ENCODE measurements at regions of chr7 and their contacts with region 1.

Region 1: GRCh38 chr7:101138213-101138870 is 11.4 kb downstream of the SERPINE1 start:
- DNase-seq: peak; percentile 91
- ATAC-seq: peak; percentile 90
- H3K4me3 Mint-ChIP-seq: peak overlapping the region; percentile 54
- H3K27ac Mint-ChIP-seq: peak overlapping the region; percentile 82
- H3K4me1 Mint-ChIP-seq: peaks cover 47% of the 10 kb centered on the region
- H3K27me3 Mint-ChIP-seq: peaks cover 16% of the 10 kb centered on the region

Region 2: DNA sequence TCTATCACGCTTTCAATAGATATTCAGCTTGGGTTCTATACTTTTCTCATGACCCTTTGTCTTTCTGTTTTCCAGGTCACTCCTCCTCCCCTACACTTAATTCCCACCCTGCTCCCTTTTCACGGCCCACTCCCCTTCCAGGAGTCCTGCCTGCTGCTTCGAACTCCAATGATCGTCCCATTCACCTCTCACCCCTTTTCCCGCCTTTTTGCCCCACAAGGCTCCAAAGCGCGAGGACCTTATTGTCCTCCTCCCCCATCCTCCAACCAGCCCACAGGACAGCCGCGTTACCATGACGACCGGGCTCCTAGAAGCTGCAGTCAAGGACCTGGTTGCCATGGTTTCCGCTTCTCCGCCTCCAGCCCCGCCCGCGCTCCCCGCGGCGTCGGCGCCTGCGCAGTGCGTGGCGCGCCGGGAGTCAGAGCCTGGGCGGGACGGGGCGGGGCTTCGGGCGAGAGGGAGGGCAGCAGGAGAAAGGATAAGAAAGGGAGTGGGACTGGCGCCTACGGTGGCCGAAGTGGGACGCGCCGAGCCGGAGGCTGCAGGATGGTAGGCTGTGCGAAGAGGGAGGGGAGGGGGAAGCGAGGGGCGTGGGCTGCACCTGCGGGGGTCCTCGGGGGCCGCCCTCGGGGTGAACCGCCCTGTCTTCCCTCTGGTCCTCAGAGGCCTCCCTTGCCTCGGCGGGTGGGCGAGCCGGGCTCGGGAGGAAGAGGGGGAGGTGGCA is 15.8 kb after region 1 on chr7 and contains the start of gene AP1S1:
- CTCF ChIA-PET with region 1: interaction called, 72 read pairs
- POLR2A ChIA-PET with region 1: no interaction called
- DNase-seq: peak; percentile 96
- ATAC-seq: peak; percentile 86
- H3K4me3 Mint-ChIP-seq: peak within 1 kb of the TSS; percentile 80
- H3K27ac Mint-ChIP-seq: peak within 1 kb of the TSS; percentile 76
- H3K4me1 Mint-ChIP-seq: peaks cover 14% of the 10 kb centered on the region
- H3K27me3 Mint-ChIP-seq: peaks cover 17% of the 10 kb centered on the region
- total RNA-seq, gene AP1S1: 46.2 to 48.9 TPM

Region 3: GRCh38 chr7:101173752-101174244 is 35.5 kb after region 1 on chr7:
- CTCF ChIA-PET with region 1: interaction called, 59 read pairs
- POLR2A ChIA-PET with region 1: no interaction called
- DNase-seq: peak; percentile 81
- ATAC-seq: peak; percentile 65
- H3K4me3 Mint-ChIP-seq: peak overlapping the region; percentile 49
- H3K27ac Mint-ChIP-seq: no peak overlapping the region
- H3K4me1 Mint-ChIP-seq: peaks cover 49% of the 10 kb centered on the region
- H3K27me3 Mint-ChIP-seq: peaks cover 82% of the 10 kb centered on the region

Region 4: DNA sequence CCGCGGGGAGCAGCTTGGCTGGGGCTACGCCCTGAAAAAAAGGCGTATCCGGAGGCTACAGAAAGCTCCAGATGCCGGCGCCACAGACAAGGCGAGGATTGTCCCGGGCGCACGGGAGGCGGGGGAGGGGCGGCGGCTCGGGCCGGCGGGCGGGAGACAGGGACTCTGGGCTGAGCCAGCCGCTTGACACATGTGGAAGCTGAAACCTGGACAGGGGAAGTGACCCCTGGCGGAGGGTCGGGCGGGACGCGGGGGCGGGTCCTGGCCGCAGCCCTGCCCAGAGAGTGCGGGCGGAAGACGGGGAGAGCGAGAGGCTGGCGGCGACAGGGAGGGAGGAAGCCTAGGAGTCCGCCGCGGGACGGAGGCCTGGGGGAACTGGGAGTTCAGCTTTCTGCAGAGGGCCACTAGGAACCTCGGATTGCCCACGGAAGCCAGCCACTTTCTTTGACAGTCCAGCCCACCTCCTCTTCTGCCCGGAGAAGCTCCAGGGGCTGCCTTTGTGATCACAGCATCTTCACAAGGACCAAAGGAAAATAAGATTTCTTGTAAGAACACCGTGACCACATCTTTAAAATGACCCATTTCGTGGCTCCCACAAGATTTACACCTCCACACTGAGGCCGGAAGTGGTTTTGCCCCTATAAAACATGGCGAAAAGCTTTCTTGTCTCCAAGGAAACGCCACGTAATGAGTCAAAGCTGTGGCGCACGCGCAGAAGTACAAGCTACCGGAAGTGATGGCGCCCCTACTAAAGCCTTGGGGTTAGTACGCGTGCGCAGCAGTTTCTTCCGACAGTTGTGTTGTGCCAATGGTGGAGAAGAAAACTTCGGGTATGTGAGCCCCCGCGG is 79.3 kb after region 1 on chr7 and contains the starts of genes PLOD3 and ZNHIT1:
- CTCF ChIA-PET with region 1: interaction called, 18 read pairs
- POLR2A ChIA-PET with region 1: no interaction called
- DNase-seq: peak; percentile 99
- ATAC-seq: peak; percentile 71
- H3K4me3 Mint-ChIP-seq: peak within 1 kb of the TSS; percentile 96
- H3K27ac Mint-ChIP-seq: peak within 1 kb of the TSS; percentile 88
- H3K4me1 Mint-ChIP-seq: peaks cover 36% of the 10 kb centered on the region
- H3K27me3 Mint-ChIP-seq: no peaks in the 10 kb centered on the region
- total RNA-seq, gene PLOD3: 51.1 to 58.1 TPM
- total RNA-seq, gene ZNHIT1: 56.1 to 58.4 TPM

Region 5: DNA sequence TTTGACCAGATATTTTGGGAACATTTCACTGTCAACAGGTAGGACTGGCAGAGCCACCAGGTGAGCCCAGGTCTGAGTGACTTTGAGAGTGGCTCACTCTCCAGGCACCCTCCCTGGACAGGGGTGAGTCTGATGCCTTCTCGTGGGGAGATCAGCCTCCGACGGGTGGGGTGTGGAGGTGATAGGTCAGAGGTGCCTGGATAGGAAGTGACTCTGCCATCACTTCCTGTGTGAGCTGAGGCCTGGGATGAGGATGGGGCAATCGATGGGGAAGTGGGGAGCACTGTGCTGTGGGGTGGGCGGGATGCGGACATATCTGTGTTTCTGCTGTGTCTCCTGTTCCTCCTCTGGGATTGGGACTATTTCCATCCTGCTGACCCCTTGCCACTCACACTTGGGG is 148.7 kb after region 1 on chr7:
- CTCF ChIA-PET with region 1: interaction called, 50 read pairs
- POLR2A ChIA-PET with region 1: no interaction called
- DNase-seq: no peak
- ATAC-seq: no peak
- H3K4me3 Mint-ChIP-seq: no peak overlapping the region
- H3K27ac Mint-ChIP-seq: no peak overlapping the region
- H3K4me1 Mint-ChIP-seq: peaks cover 24% of the 10 kb centered on the region
- H3K27me3 Mint-ChIP-seq: peaks cover 7% of the 10 kb centered on the region